ENCODE measurements at regions of chr19 and their contacts with region 1.

Region 1: DNA sequence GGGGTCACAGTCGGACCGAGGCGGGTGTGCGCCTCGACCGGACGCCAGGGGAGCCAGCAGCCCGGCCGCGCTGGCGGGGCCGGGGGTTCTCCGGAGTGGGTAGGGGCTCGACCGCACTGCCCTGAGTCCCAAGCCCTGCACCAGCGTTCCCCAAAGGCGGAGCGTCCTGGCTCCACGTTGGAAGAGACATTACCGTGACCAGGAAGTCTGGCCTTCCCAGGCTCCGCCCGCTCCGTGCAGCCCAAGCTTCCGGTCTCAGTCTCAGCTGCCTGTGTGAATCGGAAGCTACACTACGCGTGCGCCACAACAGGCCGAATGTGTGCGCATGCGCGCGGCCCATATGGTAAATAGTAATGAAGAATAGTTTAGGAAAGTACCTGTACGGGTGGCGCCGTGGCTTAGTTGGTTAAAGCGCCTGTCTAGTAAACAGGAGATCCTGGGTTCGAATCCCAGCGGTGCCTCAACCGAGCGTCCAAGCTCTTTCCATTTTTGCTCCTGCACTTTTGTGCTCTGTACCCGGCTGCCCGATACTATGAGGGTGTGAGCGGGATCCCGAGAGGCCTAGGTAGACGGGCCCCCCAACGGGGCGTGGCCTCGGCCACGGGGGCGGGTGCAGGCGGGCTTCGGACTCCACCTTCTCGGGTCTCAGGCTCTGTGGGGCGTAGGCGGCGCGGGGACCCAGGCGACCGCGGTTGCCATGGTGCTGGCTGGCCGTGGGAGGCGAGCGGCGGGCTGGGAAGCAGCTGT is 17.3 kb upstream of the LRP3 start:
- DNase-seq: peak; percentile 100
- ATAC-seq: peak; percentile 84
- H3K4me3 ChIP-seq: peak overlapping the region; percentile 43 to 97 (median 90)
- H3K4me3 Mint-ChIP-seq: peak overlapping the region; percentile 97
- H3K27ac ChIP-seq: peak overlapping the region; percentile 83 to 96
- H3K27ac Mint-ChIP-seq: peak overlapping the region; percentile 100
- H3K4me1 ChIP-seq: peaks cover 12 to 37% of the 10 kb centered on the region in 2 donors
- H3K4me1 Mint-ChIP-seq: peaks cover 32% of the 10 kb centered on the region
- H3K27me3 ChIP-seq: no peaks in the 10 kb centered on the region
- H3K27me3 Mint-ChIP-seq: peaks cover 3% of the 10 kb centered on the region
- CTCF ChIP-seq: no peak

Region 2: DNA sequence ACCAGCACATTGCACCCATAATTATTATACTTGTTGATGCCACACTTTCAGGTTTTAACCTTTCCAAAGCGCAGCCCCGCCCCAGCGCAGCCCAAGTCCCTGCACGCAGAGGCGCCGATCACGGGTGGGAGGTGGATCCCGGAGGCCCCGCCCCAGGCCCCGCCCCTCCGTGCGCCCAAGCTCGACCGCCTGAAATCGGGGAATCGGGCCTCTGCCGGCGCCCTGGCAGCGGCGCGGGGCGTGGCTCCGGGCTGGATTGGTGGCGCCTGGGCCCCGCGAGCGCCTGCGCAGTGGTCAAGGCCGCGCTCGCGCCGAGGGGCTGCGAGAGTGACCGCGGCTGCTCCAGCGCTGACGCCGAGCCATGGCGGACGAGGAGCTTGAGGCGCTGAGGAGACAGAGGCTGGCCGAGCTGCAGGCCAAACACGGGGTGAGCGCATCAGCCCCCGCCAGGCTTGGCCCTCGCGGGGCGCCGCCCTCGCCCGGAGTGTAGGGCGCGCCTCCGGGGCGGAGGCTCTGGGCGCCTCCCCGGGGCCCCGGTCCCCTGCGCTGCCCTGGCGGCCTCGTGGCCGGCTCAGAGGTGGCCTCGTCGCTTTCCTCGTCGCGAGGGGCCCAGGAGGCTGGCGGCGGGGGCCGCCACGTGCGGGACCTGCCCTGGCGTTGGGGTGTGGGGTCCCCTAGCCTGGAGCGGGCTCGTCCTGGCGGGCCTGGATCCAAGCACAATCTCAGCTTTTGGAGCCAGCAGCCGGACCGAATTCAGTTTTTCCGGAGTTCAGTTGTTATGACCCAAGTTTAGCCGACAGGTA is 595.7 kb before region 1 on chr19 and contains the start of gene PDCD5:
- CTCF ChIA-PET with region 1: no interaction called
- POLR2A ChIA-PET with region 1: interaction called, 6 read pairs
- intact Hi-C with region 1: loop called (anchors 2 kb)
- DNase-seq: peak; percentile 96
- ATAC-seq: peak; percentile 94
- H3K4me3 ChIP-seq: peak within 1 kb of the TSS; percentile 51 to 85 (median 73)
- H3K4me3 Mint-ChIP-seq: peak within 1 kb of the TSS; percentile 96
- H3K27ac ChIP-seq: peak within 1 kb of the TSS in 1 of 2 donors; percentile 78
- H3K27ac Mint-ChIP-seq: peak within 1 kb of the TSS; percentile 95
- H3K4me1 ChIP-seq: peaks cover 13 to 19% of the 10 kb centered on the region in 2 donors
- H3K4me1 Mint-ChIP-seq: peaks cover 18% of the 10 kb centered on the region
- H3K27me3 ChIP-seq: no peaks in the 10 kb centered on the region
- H3K27me3 Mint-ChIP-seq: peaks cover 4% of the 10 kb centered on the region
- CTCF ChIP-seq: no peak
- total RNA-seq, gene PDCD5: 39.5 and 43.2 TPM in 2 replicates

Region 3: GRCh38 chr19:33080761-33081681 is 95.8 kb before region 1 on chr19 and contains the start of gene GPATCH1:
- CTCF ChIA-PET with region 1: interaction called, 3 read pairs
- POLR2A ChIA-PET with region 1: no interaction called
- intact Hi-C with region 1: loop called (anchors 1 kb)
- DNase-seq: peak; percentile 89
- ATAC-seq: peak; percentile 97
- H3K4me3 ChIP-seq: peak within 1 kb of the TSS; percentile 75 to 98 (median 90)
- H3K4me3 Mint-ChIP-seq: peak within 1 kb of the TSS; percentile 93
- H3K27ac ChIP-seq: peak within 1 kb of the TSS; percentile 62 to 85
- H3K27ac Mint-ChIP-seq: peak within 1 kb of the TSS; percentile 93
- H3K4me1 ChIP-seq: peaks cover 9 to 15% of the 10 kb centered on the region in 2 donors
- H3K4me1 Mint-ChIP-seq: peaks cover 19% of the 10 kb centered on the region
- H3K27me3 ChIP-seq: no peaks in the 10 kb centered on the region
- H3K27me3 Mint-ChIP-seq: no peaks in the 10 kb centered on the region
- CTCF ChIP-seq: no peak
- total RNA-seq, gene GPATCH1: 14.6 and 16.9 TPM in 2 replicates

Region 4: DNA sequence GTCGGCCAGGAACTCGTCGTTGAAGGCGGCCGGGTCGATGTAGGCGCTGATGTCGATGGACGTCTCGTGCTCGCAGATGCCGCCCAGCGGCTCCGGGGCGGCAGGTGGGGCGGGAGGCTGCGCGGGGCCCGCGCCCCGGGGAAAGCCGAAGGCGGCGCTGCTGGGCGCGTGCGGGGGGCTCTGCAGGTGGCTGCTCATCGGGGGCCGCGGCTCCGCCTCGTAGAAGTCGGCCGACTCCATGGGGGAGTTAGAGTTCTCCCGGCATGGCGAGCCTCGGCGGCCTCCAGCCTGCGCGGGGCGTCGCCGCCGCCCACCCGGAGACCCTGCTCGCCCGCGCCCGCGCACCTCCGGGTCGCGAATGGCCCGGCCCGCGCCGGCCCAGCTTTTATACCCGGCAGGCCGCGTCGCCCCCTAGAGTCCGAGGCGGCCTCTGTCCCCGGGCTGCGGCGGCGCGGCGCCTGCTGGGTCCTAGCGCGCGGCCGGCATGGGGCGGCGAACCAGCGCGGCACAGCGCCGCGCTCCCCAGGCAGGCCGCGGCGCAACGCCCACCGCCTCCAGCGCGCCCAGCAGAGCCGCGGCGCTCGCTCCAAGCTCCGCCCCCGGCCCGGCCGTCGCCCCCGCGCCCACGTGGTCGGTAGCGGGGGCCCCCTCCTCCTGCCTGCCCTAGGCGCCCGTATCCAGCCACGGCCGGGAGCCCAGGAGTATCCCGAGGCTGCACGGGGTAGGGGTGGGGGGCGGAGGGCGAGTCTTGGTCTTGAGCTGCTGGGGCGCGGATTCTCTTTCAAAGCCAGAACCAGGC is 125.5 kb after region 1 on chr19 and contains the start of gene CEBPA:
- CTCF ChIA-PET with region 1: interaction called, 5 read pairs
- POLR2A ChIA-PET with region 1: no interaction called
- intact Hi-C with region 1: loop called (anchors 2 kb)
- DNase-seq: peak; percentile 84
- ATAC-seq: peak; percentile 91
- H3K4me3 ChIP-seq: peak within 1 kb of the TSS; percentile 21 to 77 (median 58)
- H3K4me3 Mint-ChIP-seq: peak within 1 kb of the TSS; percentile 70
- H3K27ac ChIP-seq: no peak within 1 kb of the TSS
- H3K27ac Mint-ChIP-seq: no peak within 1 kb of the TSS
- H3K4me1 ChIP-seq: peaks cover 19 to 21% of the 10 kb centered on the region in 2 donors
- H3K4me1 Mint-ChIP-seq: peaks cover 10% of the 10 kb centered on the region
- H3K27me3 ChIP-seq: peaks cover 0 to 56% (median 28%) of the 10 kb centered on the region in 4 experiments
- H3K27me3 Mint-ChIP-seq: peaks cover 42% of the 10 kb centered on the region
- CTCF ChIP-seq: peak; percentile 45
- total RNA-seq, gene CEBPA: 1.7 and 2.5 TPM in 2 replicates

Region 5: DNA sequence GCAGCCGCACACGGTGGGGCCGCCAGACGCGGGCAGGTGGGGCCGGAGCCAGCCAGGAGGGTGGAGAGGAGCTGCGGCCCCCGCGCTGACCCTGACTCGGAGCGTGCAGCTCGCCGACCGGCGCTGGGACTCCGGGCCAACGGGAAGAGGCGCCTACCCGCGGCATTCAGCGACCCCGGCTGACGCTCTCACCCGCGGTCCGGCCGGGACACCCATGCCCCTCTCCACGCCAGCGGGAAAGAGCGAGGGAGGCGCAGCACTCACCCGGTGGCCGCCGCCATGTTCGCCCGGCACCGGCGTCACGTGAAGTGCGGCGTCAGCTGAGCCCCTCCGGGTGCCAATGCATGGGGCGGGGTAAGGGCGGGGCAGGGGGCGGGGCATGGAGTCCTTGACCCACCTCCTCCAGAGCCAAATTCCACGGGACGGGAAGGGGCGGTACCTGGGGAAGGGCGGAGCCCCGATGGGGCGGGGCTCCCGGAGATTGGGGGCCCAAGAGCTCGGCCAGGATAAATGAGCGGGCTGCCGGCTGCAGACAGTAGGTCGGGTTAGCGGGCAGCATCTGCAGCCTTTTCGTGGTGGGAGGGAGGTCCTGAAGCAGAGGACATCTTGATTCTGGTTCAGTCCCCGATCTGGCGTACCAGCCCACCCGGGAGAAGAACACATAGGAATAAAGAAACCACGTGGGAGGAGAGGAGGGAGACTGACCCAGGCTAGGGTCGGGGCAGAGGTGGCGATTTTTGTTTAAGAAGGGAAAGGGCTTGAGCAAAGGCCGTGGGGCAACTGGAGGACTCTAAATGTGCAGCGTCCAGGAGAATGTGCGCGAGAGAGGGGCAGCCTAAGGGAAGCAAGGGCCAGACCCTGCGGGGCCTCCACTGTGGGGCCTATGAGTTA is 344.9 kb after region 1 on chr19 and contains the start of gene PEPD:
- CTCF ChIA-PET with region 1: no interaction called
- POLR2A ChIA-PET with region 1: no interaction called
- intact Hi-C with region 1: loop called (anchors 2 kb)
- DNase-seq: peak; percentile 88
- ATAC-seq: peak; percentile 98
- H3K4me3 ChIP-seq: peak within 1 kb of the TSS; percentile 43 to 84 (median 72)
- H3K4me3 Mint-ChIP-seq: peak within 1 kb of the TSS; percentile 82
- H3K27ac ChIP-seq: peak within 1 kb of the TSS; percentile 6 to 75
- H3K27ac Mint-ChIP-seq: peak within 1 kb of the TSS; percentile 51
- H3K4me1 ChIP-seq: peaks cover 11 to 21% of the 10 kb centered on the region in 2 donors
- H3K4me1 Mint-ChIP-seq: peaks cover 18% of the 10 kb centered on the region
- H3K27me3 ChIP-seq: no peaks in the 10 kb centered on the region
- H3K27me3 Mint-ChIP-seq: no peaks in the 10 kb centered on the region
- CTCF ChIP-seq: no peak
- total RNA-seq, gene PEPD: 38.0 and 42.7 TPM in 2 replicates

Measured in B cell (primary cell).